CD4-positive, alpha-beta memory T cell (primary cell): ENCODE measurements at regions of chr4 and their contacts with region 1.

Region 1: DNA sequence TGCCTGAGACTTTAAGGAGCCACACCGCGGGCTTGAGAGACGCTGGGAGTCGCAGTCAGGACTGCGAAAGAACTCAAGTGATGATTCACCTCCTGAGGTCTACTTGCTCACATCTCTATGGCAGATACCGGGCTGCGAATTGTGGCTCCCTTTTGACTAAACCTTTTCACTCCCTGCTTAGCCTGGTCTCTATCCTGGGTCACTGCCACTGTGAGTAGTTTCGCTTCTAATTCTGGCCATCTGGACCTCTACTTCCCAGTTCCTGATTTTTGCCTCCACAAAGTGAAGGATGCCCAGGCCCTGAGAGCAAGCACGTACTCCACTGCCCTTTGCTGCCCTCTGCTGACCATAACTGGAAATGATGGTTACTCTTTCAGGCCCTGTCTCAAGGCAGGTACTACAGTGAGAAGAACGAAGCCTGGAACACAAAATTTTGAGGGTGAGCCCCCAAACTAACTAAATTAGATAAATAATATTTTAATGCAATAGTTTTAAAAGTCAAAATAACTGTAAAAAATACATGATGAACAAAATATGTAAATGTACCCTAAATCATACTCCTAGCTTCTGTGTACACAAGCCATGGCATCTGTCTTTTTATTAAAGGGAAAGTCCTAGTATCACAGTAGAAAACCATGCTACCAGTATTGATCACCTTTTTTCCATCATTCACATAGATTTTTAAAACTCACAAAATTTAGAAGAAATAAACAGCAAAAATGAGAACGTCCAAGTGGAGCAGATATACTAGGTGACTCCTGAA is 16.7 kb downstream of the MAD2L1 start:
- DNase-seq: peak; percentile 63 to 74 (median 69)
- H3K4me3 ChIP-seq: no peak overlapping the region
- H3K4me3 Mint-ChIP-seq: peak overlapping the region in 6 of 8 donors; percentile 13 to 87 (median 46)
- H3K27ac ChIP-seq: no peak overlapping the region
- H3K27ac Mint-ChIP-seq: peak overlapping the region in 1 of 7 donors; percentile 35
- H3K4me1 ChIP-seq: no peaks in the 10 kb centered on the region
- H3K4me1 Mint-ChIP-seq: peaks cover 2 to 6% (median 3%) of the 10 kb centered on the region in 4 donors
- H3K27me3 ChIP-seq: no peaks in the 10 kb centered on the region
- H3K27me3 Mint-ChIP-seq: no peaks in the 10 kb centered on the region

Region 2: DNA sequence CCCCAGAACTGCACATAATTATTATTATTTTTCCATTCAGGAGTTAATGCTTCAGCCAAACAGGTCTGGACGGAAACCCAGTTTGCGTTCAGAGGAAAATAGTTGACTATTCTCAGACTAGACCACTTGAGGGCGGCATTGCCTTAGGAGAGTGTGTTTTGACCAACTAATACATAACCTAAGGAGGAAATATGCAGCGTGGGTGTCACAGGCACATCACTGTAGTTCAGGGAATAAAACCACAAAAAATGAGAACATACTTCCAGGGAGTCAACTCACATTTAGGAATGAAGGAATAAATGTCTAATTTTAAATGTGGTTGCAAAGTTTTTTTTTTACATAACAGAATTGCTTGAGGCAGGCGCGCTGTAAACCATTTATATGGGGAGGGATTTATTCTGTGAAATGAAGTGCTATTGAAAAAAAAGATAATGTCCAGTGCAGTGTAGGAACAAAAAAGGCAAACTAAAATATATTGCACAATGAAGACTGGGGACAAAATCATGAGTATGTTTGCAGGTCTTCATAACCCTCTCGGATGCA is 1068.0 kb before region 1 on chr4:
- CTCF ChIA-PET with region 1: interaction called, 5 read pairs
- POLR2A ChIA-PET with region 1: no interaction called
- intact Hi-C with region 1: loop called (anchors 1 kb)
- DNase-seq: peak; percentile 42 to 53 (median 52)
- H3K4me3 ChIP-seq: no peak overlapping the region
- H3K4me3 Mint-ChIP-seq: no peak overlapping the region
- H3K27ac ChIP-seq: no peak overlapping the region
- H3K27ac Mint-ChIP-seq: no peak overlapping the region
- H3K4me1 ChIP-seq: no peaks in the 10 kb centered on the region
- H3K4me1 Mint-ChIP-seq: no peaks in the 10 kb centered on the region
- H3K27me3 ChIP-seq: no peaks in the 10 kb centered on the region
- H3K27me3 Mint-ChIP-seq: peaks cover 3 to 5% of the 10 kb centered on the region in 2 donors

Region 3: DNA sequence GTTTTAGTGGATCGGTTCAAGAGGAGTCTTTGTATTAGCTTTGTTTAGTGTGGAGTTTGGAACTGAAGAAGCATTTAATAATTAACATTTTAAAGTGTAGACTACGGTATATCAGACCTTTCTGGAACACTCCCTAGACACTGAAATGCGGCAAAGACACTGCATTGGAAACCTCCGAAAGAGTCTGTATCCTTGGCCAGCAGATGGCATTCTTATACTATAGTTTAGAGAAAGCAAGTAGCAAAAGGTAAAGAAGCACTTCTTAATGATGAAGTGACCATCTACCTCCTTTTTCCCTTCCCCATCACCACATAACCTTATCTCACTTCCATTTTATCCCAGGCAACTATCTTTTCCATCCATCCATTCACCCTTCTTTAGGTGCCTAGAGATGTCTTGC is 735.6 kb before region 1 on chr4:
- CTCF ChIA-PET with region 1: interaction called, 4 read pairs
- POLR2A ChIA-PET with region 1: no interaction called
- intact Hi-C with region 1: loop called (anchors 1 kb)
- DNase-seq: peak in 4 of 5 donors; percentile 33 to 46 (median 40)
- H3K4me3 ChIP-seq: no peak overlapping the region
- H3K4me3 Mint-ChIP-seq: no peak overlapping the region
- H3K27ac ChIP-seq: no peak overlapping the region
- H3K27ac Mint-ChIP-seq: no peak overlapping the region
- H3K4me1 ChIP-seq: no peaks in the 10 kb centered on the region
- H3K4me1 Mint-ChIP-seq: no peaks in the 10 kb centered on the region
- H3K27me3 ChIP-seq: no peaks in the 10 kb centered on the region
- H3K27me3 Mint-ChIP-seq: peaks cover 7 to 9% of the 10 kb centered on the region in 2 donors

Region 4: GRCh38 chr4:119559044-119559647 is 490.8 kb before region 1 on chr4:
- CTCF ChIA-PET with region 1: interaction called, 4 read pairs
- POLR2A ChIA-PET with region 1: no interaction called
- intact Hi-C with region 1: loop called (anchors 1 kb)
- DNase-seq: peak in 3 of 5 donors; percentile 1 to 7 (median 5)
- H3K4me3 ChIP-seq: no peak overlapping the region
- H3K4me3 Mint-ChIP-seq: no peak overlapping the region
- H3K27ac ChIP-seq: no peak overlapping the region
- H3K27ac Mint-ChIP-seq: no peak overlapping the region
- H3K4me1 ChIP-seq: no peaks in the 10 kb centered on the region
- H3K4me1 Mint-ChIP-seq: no peaks in the 10 kb centered on the region
- H3K27me3 ChIP-seq: no peaks in the 10 kb centered on the region
- H3K27me3 Mint-ChIP-seq: no peaks in the 10 kb centered on the region

Region 5: GRCh38 chr4:119894650-119895208 is 155.2 kb before region 1 on chr4:
- CTCF ChIA-PET with region 1: no interaction called
- POLR2A ChIA-PET with region 1: no interaction called
- intact Hi-C with region 1: no loop called
- DNase-seq: no peak
- H3K4me3 ChIP-seq: no peak overlapping the region
- H3K4me3 Mint-ChIP-seq: no peak overlapping the region
- H3K27ac ChIP-seq: no peak overlapping the region
- H3K27ac Mint-ChIP-seq: no peak overlapping the region
- H3K4me1 ChIP-seq: no peaks in the 10 kb centered on the region
- H3K4me1 Mint-ChIP-seq: no peaks in the 10 kb centered on the region
- H3K27me3 ChIP-seq: no peaks in the 10 kb centered on the region
- H3K27me3 Mint-ChIP-seq: no peaks in the 10 kb centered on the region

Region 6: DNA sequence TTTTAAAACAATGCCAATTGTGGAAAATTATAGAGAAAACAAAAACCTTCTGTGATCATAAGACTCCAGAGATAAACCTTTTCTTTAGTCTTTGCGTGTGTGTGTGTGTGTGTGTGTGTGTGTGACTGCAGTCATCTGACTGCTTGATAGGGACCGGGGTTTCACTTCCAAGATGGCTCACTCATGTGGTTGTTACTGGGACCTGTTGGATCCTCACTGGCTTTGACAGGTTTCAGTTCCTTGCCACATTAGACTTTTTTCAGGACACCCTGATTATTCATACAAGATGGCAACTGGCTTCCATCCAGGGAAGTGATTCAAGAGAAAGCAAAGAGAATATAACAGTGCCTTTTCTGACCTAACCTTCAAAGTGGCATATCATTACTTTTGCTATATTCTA is 38.6 kb after region 1 on chr4:
- CTCF ChIA-PET with region 1: no interaction called
- POLR2A ChIA-PET with region 1: no interaction called
- intact Hi-C with region 1: no loop called
- DNase-seq: no peak
- H3K4me3 ChIP-seq: no peak overlapping the region
- H3K4me3 Mint-ChIP-seq: no peak overlapping the region
- H3K27ac ChIP-seq: no peak overlapping the region
- H3K27ac Mint-ChIP-seq: no peak overlapping the region
- H3K4me1 ChIP-seq: no peaks in the 10 kb centered on the region
- H3K4me1 Mint-ChIP-seq: no peaks in the 10 kb centered on the region
- H3K27me3 ChIP-seq: no peaks in the 10 kb centered on the region
- H3K27me3 Mint-ChIP-seq: peaks cover 6 to 17% of the 10 kb centered on the region in 2 donors

Region 7: GRCh38 chr4:120132935-120133334 is 83.0 kb after region 1 on chr4:
- CTCF ChIA-PET with region 1: no interaction called
- POLR2A ChIA-PET with region 1: no interaction called
- intact Hi-C with region 1: no loop called
- DNase-seq: no peak
- H3K4me3 ChIP-seq: no peak overlapping the region
- H3K4me3 Mint-ChIP-seq: no peak overlapping the region
- H3K27ac ChIP-seq: no peak overlapping the region
- H3K27ac Mint-ChIP-seq: no peak overlapping the region
- H3K4me1 ChIP-seq: no peaks in the 10 kb centered on the region
- H3K4me1 Mint-ChIP-seq: no peaks in the 10 kb centered on the region
- H3K27me3 ChIP-seq: no peaks in the 10 kb centered on the region
- H3K27me3 Mint-ChIP-seq: peaks cover 0 to 2% of the 10 kb centered on the region in 2 donors